ENCODE measurements at regions of chr14 and their contacts with region 1.

Region 1: GRCh38 chr14:102591889-102592763 is at the start of gene RCOR1:
- DNase-seq: peak; percentile 97
- H3K4me3 Mint-ChIP-seq: peak within 1 kb of the TSS; percentile 91
- H3K27ac Mint-ChIP-seq: peak within 1 kb of the TSS; percentile 95
- H3K4me1 Mint-ChIP-seq: peaks cover 21% of the 10 kb centered on the region
- H3K27me3 Mint-ChIP-seq: no peaks in the 10 kb centered on the region
- total RNA-seq, gene RCOR1: 22.2 and 24.3 TPM in 2 replicates

Region 2: DNA sequence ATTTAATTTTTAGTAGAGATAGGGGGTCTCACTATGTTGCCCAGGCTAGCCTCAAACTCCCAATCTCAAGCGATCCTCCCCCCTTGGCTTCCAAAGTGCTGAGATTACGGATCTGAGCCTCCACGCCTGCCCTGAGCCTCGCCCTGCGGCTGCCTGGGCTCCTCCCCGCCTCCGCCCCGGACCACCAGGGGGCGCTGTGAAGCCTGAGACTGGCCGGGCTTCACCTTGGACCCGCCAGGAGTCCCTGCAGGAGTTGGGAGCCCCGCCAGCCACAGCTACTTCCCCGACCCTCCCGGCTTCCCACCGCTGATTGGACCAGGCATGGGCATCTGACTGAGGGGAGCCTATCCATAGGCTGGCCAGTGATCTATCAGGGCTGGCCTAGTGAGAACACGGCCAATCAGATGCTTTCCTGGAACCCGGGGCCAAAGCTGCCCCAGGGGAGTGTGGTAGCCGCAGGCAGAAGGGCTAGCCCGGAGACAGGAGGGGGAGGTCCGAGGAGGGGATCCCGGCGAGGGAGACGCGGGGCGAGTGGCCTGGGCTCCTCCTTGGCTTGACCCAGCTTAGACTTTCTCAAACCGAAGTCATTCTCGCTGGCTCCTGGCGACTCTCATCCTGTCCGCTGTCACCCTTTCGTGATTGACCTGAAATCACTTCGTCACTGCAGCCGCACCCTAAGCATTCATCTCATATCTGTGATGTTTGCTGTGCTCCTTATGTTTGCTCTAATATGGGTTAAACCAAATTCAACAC is 67.5 kb before region 1 on chr14:
- intact Hi-C with region 1: loop called (anchors 1 kb)
- DNase-seq: peak; percentile 95
- H3K4me3 Mint-ChIP-seq: peak overlapping the region; percentile 94
- H3K27ac Mint-ChIP-seq: peak overlapping the region; percentile 90
- H3K4me1 Mint-ChIP-seq: peaks cover 15% of the 10 kb centered on the region
- H3K27me3 Mint-ChIP-seq: no peaks in the 10 kb centered on the region

Region 3: DNA sequence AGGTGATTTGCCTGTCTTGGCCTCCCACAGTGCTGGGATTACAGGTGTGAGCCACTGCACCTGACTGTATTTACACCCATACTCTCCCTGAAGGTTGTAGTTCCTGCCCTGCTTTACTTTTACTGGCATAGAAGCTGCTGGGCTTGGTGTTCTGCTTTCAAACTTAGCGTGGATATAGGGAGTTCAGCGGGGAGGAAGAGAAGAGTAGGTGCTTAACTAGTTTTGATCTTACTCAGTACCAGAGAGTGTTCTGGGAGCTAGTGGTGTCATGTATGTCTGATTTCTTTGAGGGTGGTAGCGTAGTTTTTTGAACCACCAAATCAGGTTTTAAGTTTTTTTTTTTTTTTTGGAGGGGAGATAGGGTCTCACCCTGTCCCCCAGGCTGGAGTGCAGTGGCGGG is 14.2 kb after region 1 on chr14:
- intact Hi-C with region 1: loop called (anchors 1 kb)
- DNase-seq: no peak
- H3K4me3 Mint-ChIP-seq: no peak overlapping the region
- H3K27ac Mint-ChIP-seq: peak overlapping the region; percentile 22
- H3K4me1 Mint-ChIP-seq: peaks cover 26% of the 10 kb centered on the region
- H3K27me3 Mint-ChIP-seq: no peaks in the 10 kb centered on the region

Region 4: DNA sequence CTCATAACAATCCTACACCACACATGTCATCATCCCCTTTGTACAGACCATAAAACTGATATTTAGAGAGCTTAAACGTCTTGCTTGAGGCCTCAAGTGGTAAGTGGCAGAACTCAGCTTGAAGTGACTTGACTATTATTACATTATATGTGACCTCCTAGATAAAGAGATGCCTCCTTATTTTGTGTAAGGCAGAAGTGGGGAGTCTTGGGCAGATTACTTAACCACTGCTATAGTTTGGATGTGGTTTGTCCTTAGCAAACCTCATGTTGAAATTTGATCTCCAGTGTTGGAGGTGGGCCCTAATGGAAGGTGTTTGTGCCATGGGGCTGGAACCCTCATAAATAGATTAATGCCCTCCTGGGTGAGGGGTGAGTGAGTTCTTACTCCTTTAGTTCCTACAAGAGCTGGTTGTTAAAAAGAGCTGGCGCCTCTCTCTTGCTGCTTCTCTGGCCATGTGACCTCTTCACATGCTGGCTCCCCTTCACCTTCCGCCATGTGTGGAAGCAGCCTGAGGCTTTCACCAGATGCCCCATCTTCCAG is 37.8 kb after region 1 on chr14:
- intact Hi-C with region 1: loop called (anchors 5 kb)
- DNase-seq: no peak
- H3K4me3 Mint-ChIP-seq: no peak overlapping the region
- H3K27ac Mint-ChIP-seq: no peak overlapping the region
- H3K4me1 Mint-ChIP-seq: peaks cover 21% of the 10 kb centered on the region
- H3K27me3 Mint-ChIP-seq: no peaks in the 10 kb centered on the region

Region 5: DNA sequence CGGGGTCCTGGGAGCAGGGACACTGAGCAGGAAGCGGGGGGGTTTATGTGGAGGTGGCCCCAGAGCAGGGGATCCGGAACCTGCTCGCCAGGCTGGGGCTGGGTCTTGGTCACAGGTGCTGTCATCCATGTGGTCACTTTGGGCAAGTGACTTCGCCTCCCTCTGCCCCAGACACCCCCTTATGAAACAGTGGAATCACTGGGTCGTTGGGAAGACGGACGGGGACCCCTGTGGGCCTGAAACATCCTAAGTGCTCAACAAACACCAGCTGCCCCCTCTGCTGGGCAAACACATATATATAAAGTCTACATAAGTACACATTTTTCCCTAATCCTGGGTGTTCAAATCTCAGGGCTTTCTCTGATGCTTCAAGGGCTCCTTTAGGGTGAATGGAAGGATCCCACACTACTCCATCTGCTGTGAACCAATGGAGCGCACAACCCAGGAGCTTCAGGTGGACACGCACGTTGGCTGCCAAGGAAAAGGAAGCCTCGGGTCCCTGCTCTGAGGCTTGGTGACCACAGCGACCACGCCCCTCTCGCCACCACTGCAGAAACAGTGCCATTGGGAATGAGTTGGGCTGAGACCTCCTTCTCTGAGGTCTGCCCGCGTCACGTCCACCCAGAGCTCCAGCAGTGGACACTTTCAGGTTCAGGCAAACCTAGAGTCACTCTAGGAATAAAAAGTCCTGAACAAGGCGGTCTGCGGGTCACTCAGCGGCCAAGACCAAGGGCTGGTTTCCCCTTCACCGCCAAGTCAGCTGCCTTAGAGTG is 410.6 kb after region 1 on chr14:
- intact Hi-C with region 1: no loop called
- DNase-seq: no peak
- H3K4me3 Mint-ChIP-seq: no peak overlapping the region
- H3K27ac Mint-ChIP-seq: no peak overlapping the region
- H3K4me1 Mint-ChIP-seq: no peaks in the 10 kb centered on the region
- H3K27me3 Mint-ChIP-seq: no peaks in the 10 kb centered on the region

Measured in activated T-helper 2 cell treated with anti-CD3 and anti-CD28 coated beads, Interferon-gamma antibody, Interleukin-2, Interleukin-4, amounts not matched to agents 10 μg/mL and 5 μg/mL and 100 μg/mL, durations not matched to agents 14 hours and 24 hours and 36 hours (primary cell).